Heart right ventricle (tissue), 16 donors: ENCODE measurements at regions of chr2 and their contacts with region 1.

Region 1: GRCh38 chr2:69914170-69914960 is 544 bp upstream of the MXD1 start:
- DNase-seq: peak; percentile 97 to 100
- ATAC-seq: peak; percentile 94 to 98 (median 96)
- H3K4me3 ChIP-seq: peak overlapping the region; percentile 45 to 95 (median 76)
- H3K27ac ChIP-seq: peak overlapping the region; percentile 80 to 97 (median 96)
- H3K4me1 ChIP-seq: peaks cover 0 to 59% (median 34%) of the 10 kb centered on the region in 9 donors
- H3K27me3 ChIP-seq: no peaks in the 10 kb centered on the region
- CTCF ChIP-seq: peak in 5 of 9 donors; percentile 29 to 53 (median 36)

Region 2: DNA sequence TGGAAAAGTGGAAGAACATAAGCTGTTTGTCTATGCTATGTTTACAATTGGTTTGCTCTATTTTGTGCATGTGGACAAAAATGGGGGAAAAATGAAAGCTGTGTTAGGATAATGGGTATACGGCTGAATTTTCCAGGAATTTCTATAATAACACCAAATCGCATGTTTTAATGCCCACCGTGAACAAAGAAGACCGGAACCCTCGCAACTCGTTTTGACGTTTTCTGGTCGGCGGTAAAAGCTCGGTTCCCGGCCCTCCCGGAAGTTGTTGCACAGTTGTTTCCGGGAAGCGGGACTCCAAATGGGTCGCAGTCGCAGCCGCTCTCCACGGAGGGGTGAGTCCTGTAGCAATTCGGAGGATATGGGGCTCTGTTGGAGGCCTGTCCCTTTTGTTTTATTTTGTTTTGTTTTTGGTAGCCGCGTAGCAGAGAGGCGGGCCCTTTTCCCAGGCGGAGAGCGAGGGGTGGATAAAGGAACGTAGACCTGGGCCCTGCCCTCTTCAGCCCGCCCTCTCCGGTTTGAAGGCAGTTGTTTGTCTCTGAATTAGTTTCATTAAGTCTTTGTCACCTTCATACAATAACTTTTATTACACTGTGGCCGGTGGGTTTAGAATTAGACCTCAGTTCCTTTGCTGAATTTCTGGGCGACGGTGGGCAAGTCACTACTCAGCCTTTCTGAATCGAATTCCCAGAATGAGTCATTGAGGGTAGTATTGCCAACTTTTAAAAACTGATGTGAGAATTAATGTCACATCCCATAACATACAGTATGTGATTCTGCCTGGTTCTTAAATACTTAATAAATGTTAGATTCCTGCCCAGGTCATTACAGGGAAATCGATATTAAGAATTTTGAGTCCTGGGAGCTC is 20.4 kb before region 1 on chr2 and contains the start of gene SNRNP27:
- intact Hi-C with region 1: loop called in 1 of 10 experiments (anchors 2 kb)
- DNase-seq: peak; percentile 72 to 85
- ATAC-seq: peak; percentile 86 to 95 (median 91)
- H3K4me3 ChIP-seq: peak within 1 kb of the TSS; percentile 54 to 97 (median 70)
- H3K27ac ChIP-seq: peak within 1 kb of the TSS in 9 of 10 donors; percentile 71 to 95 (median 81)
- H3K4me1 ChIP-seq: peaks cover 3 to 31% (median 19%) of the 10 kb centered on the region in 9 donors
- H3K27me3 ChIP-seq: no peaks in the 10 kb centered on the region
- CTCF ChIP-seq: no peak
- total RNA-seq, gene SNRNP27: 47.0 to 68.4 (median 53.7) TPM

Region 3: DNA sequence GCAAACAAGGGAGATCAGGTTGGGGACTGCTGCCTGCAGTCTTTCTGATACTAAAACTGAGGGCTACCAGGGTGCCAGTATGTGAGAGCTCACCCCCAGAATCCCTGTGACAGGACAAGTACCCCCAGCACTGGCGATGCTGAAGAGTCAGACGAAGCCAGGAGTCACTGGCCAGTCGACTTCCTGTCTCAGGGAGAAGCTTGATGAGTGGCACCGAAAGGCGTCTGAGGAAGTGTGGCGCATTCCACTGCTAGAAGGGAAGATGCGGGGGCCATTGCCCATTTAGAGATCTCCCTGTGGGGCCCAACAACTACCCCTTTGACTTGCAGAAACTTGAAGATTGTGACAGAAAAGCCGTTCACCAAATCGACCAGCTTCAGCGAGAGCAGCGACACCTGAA is 22.5 kb after region 1 on chr2:
- intact Hi-C with region 1: no loop called
- DNase-seq: no peak
- ATAC-seq: no peak
- H3K4me3 ChIP-seq: no peak overlapping the region
- H3K27ac ChIP-seq: peak overlapping the region in 1 of 10 donors; percentile 10
- H3K4me1 ChIP-seq: peaks cover 5 to 36% (median 14%) of the 10 kb centered on the region in 9 donors
- H3K27me3 ChIP-seq: no peaks in the 10 kb centered on the region
- CTCF ChIP-seq: no peak

Region 4: DNA sequence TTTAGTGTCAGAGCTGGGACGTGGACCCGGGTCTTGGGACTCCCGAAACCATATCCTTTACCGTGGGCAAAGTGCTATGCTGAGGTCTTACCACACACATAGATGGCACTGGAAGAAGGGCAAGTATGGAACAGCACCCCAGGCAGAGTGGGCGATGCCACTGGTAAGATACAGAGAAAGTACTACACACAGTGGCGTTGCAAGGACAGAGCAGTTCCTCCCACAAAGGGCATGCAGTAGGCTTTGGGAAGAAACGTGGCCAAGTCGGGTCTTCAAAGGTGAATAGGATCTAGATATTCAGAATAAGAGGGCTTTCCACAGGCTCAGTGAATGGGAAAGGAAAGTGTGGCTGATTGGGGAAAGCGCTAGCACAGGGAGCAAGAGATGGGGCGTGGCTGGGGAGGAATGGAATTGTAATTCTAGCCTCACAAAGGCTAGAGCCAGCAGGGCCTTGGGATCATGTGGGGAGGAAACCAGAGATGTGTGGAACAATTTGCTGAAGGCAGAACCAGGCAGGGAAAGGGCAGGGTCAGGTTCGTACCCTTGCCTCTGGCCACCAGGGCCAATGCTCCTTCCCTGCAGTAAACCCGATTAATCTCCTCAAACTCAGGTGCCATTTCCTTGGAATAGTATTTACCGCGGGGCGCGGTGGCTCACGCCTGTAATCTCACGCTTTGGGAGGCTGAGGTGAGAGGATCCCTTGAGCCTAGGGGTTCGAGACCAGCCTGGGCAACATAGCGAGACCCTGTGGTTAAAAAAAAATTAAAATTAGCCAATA is 208.9 kb after region 1 on chr2:
- intact Hi-C with region 1: no loop called
- DNase-seq: peak; percentile 45 to 73
- ATAC-seq: peak; percentile 47 to 64 (median 58)
- H3K4me3 ChIP-seq: peak overlapping the region in 8 of 10 donors; percentile 45 to 82 (median 68)
- H3K27ac ChIP-seq: peak overlapping the region; percentile 92 to 100 (median 99)
- H3K4me1 ChIP-seq: peaks cover 13 to 72% (median 48%) of the 10 kb centered on the region in 9 donors
- H3K27me3 ChIP-seq: no peaks in the 10 kb centered on the region
- CTCF ChIP-seq: no peak